ENCODE measurements at regions of chr17 and their contacts with region 1.

Region 1: DNA sequence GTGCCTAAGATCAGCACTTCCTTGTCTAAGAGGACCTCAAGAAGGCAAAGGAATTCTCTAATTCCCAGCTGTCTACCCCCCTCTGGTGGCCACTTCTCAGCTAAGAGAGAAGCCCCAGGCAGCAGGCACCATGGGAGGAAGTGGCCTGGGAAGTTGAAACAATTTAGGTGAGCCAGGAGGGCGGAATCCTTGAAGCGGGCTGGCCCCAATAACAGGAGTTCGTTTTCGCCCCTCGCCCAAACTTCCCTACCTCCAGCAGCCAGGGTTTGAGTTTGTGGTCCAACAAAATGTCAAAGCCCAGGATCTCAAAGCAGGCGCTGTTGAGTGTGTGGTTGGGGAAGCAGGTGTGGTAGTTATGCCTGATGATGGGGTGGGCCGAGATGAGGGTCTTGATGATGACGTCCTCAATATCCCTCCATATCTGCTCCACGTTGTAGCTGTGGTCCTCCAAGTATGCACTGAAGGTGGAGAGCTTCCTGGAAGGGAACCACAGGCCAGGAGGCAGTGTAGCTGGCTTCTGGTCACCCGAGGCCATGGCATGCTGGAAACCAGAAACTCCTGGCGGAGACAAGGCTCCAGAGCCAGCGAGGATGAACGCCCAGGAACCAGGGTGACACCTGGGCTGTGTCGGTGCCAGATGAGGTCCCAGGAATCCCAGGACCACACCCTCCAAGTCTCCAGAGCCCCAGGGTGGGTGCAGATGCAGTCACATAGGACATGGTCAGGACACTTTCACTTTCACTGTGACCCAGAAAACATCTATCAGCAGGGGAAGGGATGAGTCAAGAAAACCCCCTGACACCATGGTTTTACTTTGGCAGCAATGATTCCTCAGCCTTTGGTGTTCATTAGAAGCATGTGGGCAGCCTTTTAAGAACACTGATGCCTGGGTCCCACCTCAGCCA is 25.6 kb downstream of the TTLL6 start:
- DNase-seq: peak; percentile 35
- H3K4me3 ChIP-seq: no peak overlapping the region
- H3K27me3 ChIP-seq: peaks cover 13% of the 10 kb centered on the region
- CTCF ChIP-seq: peak; percentile 89

Region 2: GRCh38 chr17:48625495-48626244 is 165.7 kb before region 1 on chr17:
- CTCF ChIA-PET with region 1: no interaction called
- POLR2A ChIA-PET with region 1: no interaction called
- DNase-seq: no peak
- H3K4me3 ChIP-seq: no peak overlapping the region
- H3K27me3 ChIP-seq: peaks cover 87% of the 10 kb centered on the region
- CTCF ChIP-seq: no peak

Region 3: GRCh38 chr17:48671697-48672171 is 119.6 kb before region 1 on chr17:
- CTCF ChIA-PET with region 1: interaction called, 86 read pairs
- POLR2A ChIA-PET with region 1: no interaction called
- DNase-seq: peak; percentile 13
- H3K4me3 ChIP-seq: peak overlapping the region; percentile 28
- H3K27me3 ChIP-seq: peaks cover 7% of the 10 kb centered on the region; the same call in 1 of the 2 replicates
- CTCF ChIP-seq: peak; percentile 92

Region 4: GRCh38 chr17:48718761-48719641 is 72.4 kb before region 1 on chr17:
- CTCF ChIA-PET with region 1: interaction called, 152 read pairs
- POLR2A ChIA-PET with region 1: interaction called, 14 read pairs
- DNase-seq: no peak
- H3K4me3 ChIP-seq: peak overlapping the region; percentile 15
- H3K27me3 ChIP-seq: peaks cover 41% of the 10 kb centered on the region
- CTCF ChIP-seq: no peak

Region 5: DNA sequence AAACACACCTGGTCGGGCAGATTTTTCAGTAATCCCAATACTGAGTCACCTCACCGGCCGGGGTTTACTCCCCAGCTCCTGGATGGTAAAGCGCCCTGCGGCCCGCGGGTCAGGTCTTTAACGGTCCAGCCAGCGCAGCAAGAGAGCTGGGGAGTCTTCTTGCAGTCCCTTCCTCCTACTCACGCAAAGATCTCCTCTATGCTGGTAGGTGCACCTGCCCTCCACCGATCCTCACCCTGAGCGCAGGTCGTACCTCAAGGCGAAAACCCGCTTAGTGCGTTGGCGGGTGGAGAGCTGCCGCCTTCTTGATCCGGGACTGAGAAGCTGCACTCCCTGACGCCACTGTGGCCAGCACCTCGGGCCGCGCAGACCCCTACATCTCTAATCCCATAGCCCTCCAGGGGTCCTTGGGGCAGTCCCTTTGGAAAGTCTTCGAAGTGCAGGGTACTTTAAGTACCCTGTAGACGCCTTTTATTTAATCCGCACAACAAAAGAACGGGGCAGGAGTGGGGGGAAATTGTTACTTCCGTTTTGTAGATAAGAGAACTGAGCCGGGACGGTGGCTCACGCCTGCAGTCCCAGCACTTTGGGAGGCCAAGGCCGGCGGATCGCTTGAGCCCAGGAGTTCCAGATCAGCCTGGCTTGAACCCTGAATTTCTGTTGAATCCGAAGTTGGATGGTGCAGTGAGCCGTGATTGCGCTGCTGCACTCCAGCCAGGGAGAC is 52.4 kb before region 1 on chr17:
- CTCF ChIA-PET with region 1: interaction called, 21 read pairs
- POLR2A ChIA-PET with region 1: no interaction called
- DNase-seq: no peak
- H3K4me3 ChIP-seq: no peak overlapping the region
- H3K27me3 ChIP-seq: peaks cover 66% of the 10 kb centered on the region
- CTCF ChIP-seq: no peak

Region 6: GRCh38 chr17:48804925-48805411 is 13.6 kb after region 1 on chr17:
- CTCF ChIA-PET with region 1: interaction called, 39 read pairs
- POLR2A ChIA-PET with region 1: no interaction called
- DNase-seq: no peak
- H3K4me3 ChIP-seq: no peak overlapping the region
- H3K27me3 ChIP-seq: peaks cover under 1% of the 10 kb centered on the region
- CTCF ChIP-seq: peak; percentile 97